CD8-positive, alpha-beta T cell (primary cell): ENCODE measurements at regions of chr18 and their contacts with region 1.

Region 1: GRCh38 chr18:27780061-27780750 is 396.7 kb downstream of the CDH2 start:
- DNase-seq: no peak
- ATAC-seq: no peak
- H3K4me3 ChIP-seq: no peak overlapping the region
- H3K4me3 Mint-ChIP-seq: no peak overlapping the region
- H3K27ac ChIP-seq: no peak overlapping the region
- H3K27ac Mint-ChIP-seq: no peak overlapping the region
- H3K4me1 ChIP-seq: no peaks in the 10 kb centered on the region
- H3K4me1 Mint-ChIP-seq: no peaks in the 10 kb centered on the region
- H3K27me3 ChIP-seq: no peaks in the 10 kb centered on the region
- H3K27me3 Mint-ChIP-seq: no peaks in the 10 kb centered on the region
- CTCF ChIP-seq: no peak

Region 2: DNA sequence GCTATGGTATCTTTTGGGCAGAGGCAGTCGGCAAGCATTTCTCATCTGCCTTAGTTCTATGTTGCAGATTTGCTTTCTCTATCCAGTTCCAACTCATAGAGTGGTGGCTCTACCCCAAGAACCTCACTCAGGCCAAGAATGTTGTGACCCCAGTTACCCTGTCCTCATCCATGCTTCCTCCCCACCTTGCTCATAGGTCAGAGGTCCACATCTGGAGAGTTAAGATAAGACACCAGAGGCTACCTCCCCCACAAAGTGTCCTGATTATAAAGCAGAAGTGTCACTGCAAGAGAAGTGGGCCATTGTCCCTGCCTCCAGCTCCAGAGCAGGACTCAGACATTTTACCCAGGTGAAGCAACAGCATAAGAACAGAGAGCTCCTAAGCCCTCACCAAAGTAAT is 318.2 kb before region 1 on chr18:
- CTCF ChIA-PET with region 1: no interaction called
- POLR2A ChIA-PET with region 1: no interaction called
- intact Hi-C with region 1: loop called in 1 of 2 experiments (anchors 5 kb)
- DNase-seq: no peak
- ATAC-seq: no peak
- H3K4me3 ChIP-seq: no peak overlapping the region
- H3K4me3 Mint-ChIP-seq: no peak overlapping the region
- H3K27ac ChIP-seq: no peak overlapping the region
- H3K27ac Mint-ChIP-seq: no peak overlapping the region
- H3K4me1 ChIP-seq: no peaks in the 10 kb centered on the region
- H3K4me1 Mint-ChIP-seq: no peaks in the 10 kb centered on the region
- H3K27me3 ChIP-seq: no peaks in the 10 kb centered on the region
- H3K27me3 Mint-ChIP-seq: no peaks in the 10 kb centered on the region
- CTCF ChIP-seq: no peak